ENCODE measurements at regions of chr17 and their contacts with region 1.

Region 1: GRCh38 chr17:82297714-82298537 is 19.5 kb downstream of the CD7 start:
- DNase-seq: no peak
- ATAC-seq: peak; percentile 45
- H3K4me3 ChIP-seq: peak overlapping the region; percentile 52 to 78 (median 56)
- H3K27ac ChIP-seq: peak overlapping the region; percentile 8
- H3K4me1 ChIP-seq: peaks cover 96% of the 10 kb centered on the region
- H3K27me3 ChIP-seq: no peaks in the 10 kb centered on the region
- CTCF ChIP-seq: peak; percentile 47
- EP300 ChIP-seq: peak; percentile 39 to 59; a peak in 1 of 4 replicates
- POLR2A ChIP-seq: no peak; a peak in 1 of 4 replicates
- RAD21 ChIP-seq: no peak

Region 2: GRCh38 chr17:81890447-81891299 is 407.3 kb before region 1 on chr17:
- CTCF ChIA-PET with region 1: no interaction called
- POLR2A ChIA-PET with region 1: no interaction called
- in situ Hi-C with region 1: no loop called
- intact Hi-C with region 1: no loop called
- DNase-seq: no peak
- ATAC-seq: no peak
- H3K4me3 ChIP-seq: peak overlapping the region; percentile 94 to 98 (median 94)
- H3K27ac ChIP-seq: peak overlapping the region; percentile 76
- H3K4me1 ChIP-seq: peaks cover 36% of the 10 kb centered on the region
- H3K27me3 ChIP-seq: peaks cover 0 to 6% of the 10 kb centered on the region in 2 experiments; a peak in 2 of 5 replicates
- CTCF ChIP-seq: no peak
- EP300 ChIP-seq: no peak
- POLR2A ChIP-seq: no peak
- RAD21 ChIP-seq: no peak

Region 3: DNA sequence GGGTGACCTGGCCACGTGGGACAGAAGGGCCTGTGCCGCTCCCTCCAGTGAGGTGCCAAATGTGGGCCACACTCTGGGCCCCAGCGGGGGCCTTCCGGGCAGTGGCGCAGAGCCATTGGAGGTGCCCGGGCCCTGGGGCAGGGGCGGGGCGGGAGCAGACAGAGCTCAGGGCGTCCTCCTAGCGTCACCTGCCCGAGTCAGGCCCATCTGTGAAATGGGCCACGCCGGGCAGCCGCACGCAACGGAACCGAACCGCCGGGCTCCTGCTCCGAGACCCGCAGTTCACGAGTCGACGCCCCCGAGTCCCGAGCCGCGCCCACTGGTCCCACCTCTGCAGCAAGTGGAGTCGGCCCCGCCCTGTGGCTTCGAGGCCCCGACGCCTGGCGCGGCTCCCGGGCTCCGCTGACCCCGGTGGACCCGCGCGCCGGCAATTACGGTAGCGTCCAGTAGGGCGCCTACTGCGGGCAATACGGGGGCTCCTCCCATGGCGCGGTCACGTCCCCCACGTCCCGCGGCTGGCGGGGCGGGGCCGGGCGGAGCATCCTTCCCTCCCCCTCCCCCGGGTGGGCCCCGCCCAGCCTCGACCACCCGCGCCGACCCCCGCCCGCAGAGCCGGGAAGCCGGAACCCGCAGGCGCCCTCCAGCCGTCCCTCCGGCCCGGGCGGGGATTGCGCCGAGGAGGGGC is 67.2 kb before region 1 on chr17:
- CTCF ChIA-PET with region 1: interaction called, 3 read pairs
- POLR2A ChIA-PET with region 1: interaction called, 28 read pairs
- in situ Hi-C with region 1: no loop called
- intact Hi-C with region 1: no loop called
- DNase-seq: peak; percentile 87
- ATAC-seq: peak; percentile 53
- H3K4me3 ChIP-seq: peak overlapping the region; percentile 76 to 99 (median 97)
- H3K27ac ChIP-seq: peak overlapping the region; percentile 84
- H3K4me1 ChIP-seq: peaks cover 75% of the 10 kb centered on the region
- H3K27me3 ChIP-seq: no peaks in the 10 kb centered on the region; a peak in 1 of 5 replicates
- CTCF ChIP-seq: peak; percentile 61
- EP300 ChIP-seq: peak in 1 of 2 experiments; percentile 53; a peak in 2 of 4 replicates
- POLR2A ChIP-seq: no peak; a peak in 1 of 4 replicates
- RAD21 ChIP-seq: peak; percentile 46; the same call in 1 of the 2 replicates

Region 4: DNA sequence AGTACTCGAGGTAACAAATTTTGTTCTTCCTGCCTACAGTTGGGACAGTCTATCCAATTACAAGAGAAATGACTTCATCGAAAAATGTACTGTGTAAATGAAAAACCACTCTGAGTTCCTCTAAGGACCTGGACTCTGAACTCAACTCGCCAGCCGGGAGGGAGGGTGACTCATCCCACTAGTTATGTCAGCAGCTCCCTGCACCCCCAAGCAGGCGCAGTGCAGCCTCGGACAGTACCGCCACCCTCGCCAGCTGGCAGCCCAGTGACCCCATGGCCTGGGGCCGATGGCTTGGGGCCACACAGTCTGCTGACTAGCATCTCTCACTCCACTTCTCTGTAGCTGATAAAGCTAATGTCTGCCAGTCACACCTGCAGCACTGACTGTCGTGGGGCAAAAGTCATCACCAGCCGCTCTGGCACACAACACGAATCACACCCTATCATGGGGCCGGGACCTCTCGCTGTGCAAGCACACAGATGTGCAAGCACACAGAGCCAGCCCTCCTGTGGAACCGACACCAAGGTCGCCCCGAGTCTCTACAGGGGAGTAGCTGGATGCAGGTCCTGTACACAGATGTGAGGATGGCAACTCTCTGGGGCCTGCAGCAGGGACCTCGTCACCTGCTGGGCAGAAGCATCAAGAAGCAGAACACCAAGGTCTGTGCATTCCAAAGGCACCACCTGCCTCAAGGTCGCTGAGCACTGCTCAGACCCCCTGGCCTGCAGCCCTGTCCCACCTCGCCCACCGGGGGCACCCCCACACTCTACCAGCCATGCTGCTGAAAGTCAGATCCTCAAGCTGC is 30.1 kb before region 1 on chr17:
- CTCF ChIA-PET with region 1: no interaction called
- POLR2A ChIA-PET with region 1: interaction called, 119 read pairs
- in situ Hi-C with region 1: no loop called
- intact Hi-C with region 1: loop called (anchors 2 kb)
- DNase-seq: peak; percentile 99
- ATAC-seq: peak; percentile 88
- H3K4me3 ChIP-seq: peak overlapping the region; percentile 12 to 65 (median 48); a peak in 5 of 6 replicates
- H3K27ac ChIP-seq: peak overlapping the region; percentile 90
- H3K4me1 ChIP-seq: peaks cover 70% of the 10 kb centered on the region
- H3K27me3 ChIP-seq: no peaks in the 10 kb centered on the region; a peak in 1 of 5 replicates
- CTCF ChIP-seq: peak; percentile 46
- EP300 ChIP-seq: peak; percentile 84 to 90
- POLR2A ChIP-seq: peak in 1 of 2 experiments; percentile 44; a peak in 3 of 4 replicates
- RAD21 ChIP-seq: peak; percentile 44

Region 5: DNA sequence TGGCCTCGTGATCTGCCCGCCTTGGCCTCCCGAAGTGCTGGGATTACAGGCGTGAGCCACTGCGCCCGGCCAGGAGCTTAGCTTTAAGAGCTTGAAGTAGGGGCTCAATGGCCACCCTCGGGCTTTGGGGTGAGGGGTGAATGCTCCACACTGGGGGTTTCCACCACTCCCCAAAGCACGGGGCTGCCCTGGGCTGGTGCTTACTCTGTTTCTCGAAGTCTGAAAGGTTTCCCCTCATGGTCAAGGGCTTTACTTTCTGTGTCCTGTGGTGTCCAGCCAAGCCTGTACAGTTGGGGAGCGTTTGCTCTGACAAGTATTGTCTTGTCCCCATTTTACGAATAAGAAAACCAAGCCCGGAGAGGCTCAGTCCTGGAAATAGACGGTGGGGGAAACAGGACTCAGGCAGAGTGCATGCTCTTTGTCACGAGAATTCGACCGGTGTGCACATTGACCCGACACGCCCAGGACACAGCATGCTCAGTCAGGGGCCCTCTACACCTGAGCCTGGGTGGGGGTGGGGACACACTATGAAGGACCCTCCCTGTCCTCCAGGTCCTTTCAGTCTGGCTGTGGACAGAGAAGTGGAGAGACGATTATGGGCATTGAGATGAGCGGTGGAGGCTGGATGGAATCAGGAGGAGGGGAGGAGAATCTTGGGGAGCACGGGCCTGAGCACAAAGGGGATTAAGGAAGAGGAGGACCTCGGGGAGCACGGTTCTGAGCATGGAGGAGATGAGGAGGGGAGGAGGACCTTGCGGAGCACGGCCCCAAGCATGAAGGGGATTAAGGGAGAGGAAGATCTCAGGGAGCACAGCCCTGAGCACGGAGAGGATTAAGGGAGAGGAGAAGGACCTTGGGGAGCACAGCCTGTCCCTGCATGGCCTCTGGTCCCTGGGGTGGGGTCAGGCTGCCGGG is 12.0 kb after region 1 on chr17:
- CTCF ChIA-PET with region 1: no interaction called
- POLR2A ChIA-PET with region 1: interaction called, 80 read pairs
- in situ Hi-C with region 1: no loop called
- intact Hi-C with region 1: no loop called
- DNase-seq: peak; percentile 72
- ATAC-seq: peak; percentile 80
- H3K4me3 ChIP-seq: peak overlapping the region in 1 of 3 experiments; percentile 34; a peak in 2 of 6 replicates
- H3K27ac ChIP-seq: peak overlapping the region; percentile 7
- H3K4me1 ChIP-seq: peaks cover 35% of the 10 kb centered on the region
- H3K27me3 ChIP-seq: no peaks in the 10 kb centered on the region
- CTCF ChIP-seq: no peak
- EP300 ChIP-seq: peak in 1 of 2 experiments; percentile 63; a peak in 2 of 4 replicates
- POLR2A ChIP-seq: no peak
- RAD21 ChIP-seq: no peak

Region 6: GRCh38 chr17:82320956-82321927 is 23.3 kb after region 1 on chr17:
- CTCF ChIA-PET with region 1: interaction called, 26 read pairs
- POLR2A ChIA-PET with region 1: interaction called, 270 read pairs
- in situ Hi-C with region 1: no loop called
- intact Hi-C with region 1: loop called (anchors 2 kb)
- DNase-seq: no peak
- ATAC-seq: peak; percentile 3; the same call in 1 of the 3 replicates
- H3K4me3 ChIP-seq: peak overlapping the region; percentile 22 to 71 (median 55); a peak in 5 of 6 replicates
- H3K27ac ChIP-seq: peak overlapping the region; percentile 63
- H3K4me1 ChIP-seq: peaks cover 90% of the 10 kb centered on the region
- H3K27me3 ChIP-seq: no peaks in the 10 kb centered on the region; a peak in 1 of 5 replicates
- CTCF ChIP-seq: peak; percentile 92
- EP300 ChIP-seq: no peak
- POLR2A ChIP-seq: no peak
- RAD21 ChIP-seq: peak; percentile 98

Region 7: DNA sequence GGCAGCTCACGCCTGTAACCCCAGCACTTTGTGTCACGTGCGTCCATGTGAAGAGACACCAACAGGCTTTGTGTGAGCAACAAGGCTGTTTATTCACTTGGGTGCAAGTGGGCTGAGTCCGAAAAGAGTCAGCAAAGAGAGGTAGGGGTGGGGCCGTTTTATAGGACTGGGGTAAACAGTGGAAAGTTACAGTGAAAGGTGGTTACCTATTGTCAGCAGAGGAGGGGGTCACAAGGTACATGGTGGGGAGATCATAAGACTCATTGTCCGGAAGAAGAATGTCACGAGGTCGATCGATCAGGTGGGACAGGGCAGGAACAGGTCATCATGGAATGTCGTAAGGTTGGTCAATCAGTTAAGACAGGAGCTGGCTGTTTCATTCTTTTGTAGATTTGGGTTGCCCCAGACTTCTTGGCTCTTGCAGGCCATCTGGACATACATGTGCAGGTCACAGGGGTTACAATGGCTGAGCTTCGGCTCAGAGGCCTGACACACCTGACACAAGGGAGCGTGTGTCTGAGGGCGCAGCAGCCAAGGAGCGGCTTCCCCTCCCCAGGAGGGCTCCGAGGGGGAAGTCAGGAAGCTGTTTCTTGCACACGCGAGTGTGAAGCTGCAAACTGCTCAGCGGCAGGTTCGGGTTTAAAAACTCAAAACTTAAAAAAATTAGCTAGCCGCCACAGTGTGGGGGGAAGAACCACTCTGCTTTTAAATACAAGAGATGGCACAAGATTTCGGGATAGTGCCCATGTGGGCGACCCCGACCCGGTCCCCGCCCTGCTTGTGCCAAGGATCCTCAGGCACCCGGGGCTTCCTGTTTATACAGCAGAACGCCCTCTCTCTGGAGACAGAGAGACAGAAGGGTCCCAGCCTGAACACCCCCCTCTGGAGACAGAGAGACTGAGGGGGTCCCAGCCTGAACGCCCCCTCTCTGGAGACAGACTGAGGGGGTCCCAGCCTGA is 48.7 kb after region 1 on chr17:
- CTCF ChIA-PET with region 1: no interaction called
- POLR2A ChIA-PET with region 1: interaction called, 73 read pairs
- in situ Hi-C with region 1: no loop called
- intact Hi-C with region 1: loop called (anchors 2 kb)
- DNase-seq: peak; percentile 100
- ATAC-seq: peak; percentile 24
- H3K4me3 ChIP-seq: no peak overlapping the region; a peak in 1 of 6 replicates
- H3K27ac ChIP-seq: peak overlapping the region; percentile 83
- H3K4me1 ChIP-seq: peaks cover 94% of the 10 kb centered on the region
- H3K27me3 ChIP-seq: no peaks in the 10 kb centered on the region
- CTCF ChIP-seq: peak; percentile 20; the same call in 1 of the 2 replicates
- EP300 ChIP-seq: peak; percentile 90 to 98
- POLR2A ChIP-seq: peak; percentile 52 to 78; a peak in 3 of 4 replicates
- RAD21 ChIP-seq: peak; percentile 68

Measured in HepG2 (cell line).